ENCODE measurements at regions of chr9 and their contacts with region 1.

Region 1: GRCh38 chr9:112233768-112234167 is 58.7 kb upstream of the SUSD1 start:
- DNase-seq: no peak
- H3K4me3 ChIP-seq: no peak overlapping the region
- H3K27ac ChIP-seq: no peak overlapping the region
- H3K4me1 ChIP-seq: peaks cover 0 to 5% of the 10 kb centered on the region in 2 donors
- H3K27me3 ChIP-seq: no peaks in the 10 kb centered on the region
- CTCF ChIP-seq: no peak
- POLR2A ChIP-seq: no peak

Region 2: DNA sequence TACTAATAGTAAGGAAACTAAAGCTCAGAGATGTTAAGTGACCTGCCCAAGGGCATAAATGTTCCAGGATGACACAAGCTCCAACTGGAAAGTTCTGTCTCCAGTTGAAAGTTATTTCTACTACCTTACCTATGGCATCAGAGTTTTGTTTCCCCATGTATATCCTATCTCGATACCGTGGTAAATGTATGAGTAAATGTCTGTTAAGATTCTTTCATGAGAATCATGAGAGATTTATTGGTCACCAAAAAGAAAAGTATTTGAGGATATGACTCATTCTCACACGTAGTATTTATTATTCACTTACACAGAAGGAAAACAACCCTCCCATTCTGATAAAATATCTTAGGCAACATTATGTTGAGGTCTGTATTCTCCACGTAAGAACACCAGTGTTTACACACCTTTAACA is 427.9 kb before region 1 on chr9:
- intact Hi-C with region 1: no loop called
- DNase-seq: no peak
- H3K4me3 ChIP-seq: no peak overlapping the region
- H3K27ac ChIP-seq: peak overlapping the region; percentile 45 to 47
- H3K4me1 ChIP-seq: no peaks in the 10 kb centered on the region
- H3K27me3 ChIP-seq: no peaks in the 10 kb centered on the region
- CTCF ChIP-seq: no peak
- POLR2A ChIP-seq: no peak

Region 3: DNA sequence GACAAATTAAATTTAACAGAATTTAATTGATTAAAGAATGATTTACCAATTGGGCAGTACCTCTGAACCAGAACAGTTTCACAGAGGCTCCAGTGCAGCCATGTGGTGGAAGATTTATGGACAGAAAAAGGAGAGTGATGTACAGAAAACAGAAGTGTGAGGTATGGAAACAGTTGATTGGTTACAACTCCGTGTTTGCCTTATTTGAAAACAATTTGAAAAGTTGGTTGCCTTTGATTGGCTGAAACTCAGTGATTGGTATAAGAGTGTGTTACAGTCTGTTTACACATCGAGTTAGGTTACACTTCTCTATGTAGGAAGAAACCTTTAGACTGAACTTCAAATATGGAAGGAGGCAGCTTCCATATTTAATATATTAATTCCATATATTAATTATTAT is 283.0 kb after region 1 on chr9:
- intact Hi-C with region 1: no loop called
- DNase-seq: no peak
- H3K4me3 ChIP-seq: no peak overlapping the region
- H3K27ac ChIP-seq: no peak overlapping the region
- H3K4me1 ChIP-seq: no peaks in the 10 kb centered on the region
- H3K27me3 ChIP-seq: no peaks in the 10 kb centered on the region
- CTCF ChIP-seq: no peak
- POLR2A ChIP-seq: no peak

Region 4: GRCh38 chr9:114149835-114150234 is 1916.1 kb after region 1 on chr9:
- intact Hi-C with region 1: loop called (anchors 5 kb)
- DNase-seq: no peak
- H3K4me3 ChIP-seq: no peak overlapping the region
- H3K27ac ChIP-seq: no peak overlapping the region
- H3K4me1 ChIP-seq: peaks cover 0 to 15% of the 10 kb centered on the region in 2 donors
- H3K27me3 ChIP-seq: no peaks in the 10 kb centered on the region
- CTCF ChIP-seq: no peak
- POLR2A ChIP-seq: no peak